Common myeloid progenitor, CD34-positive (primary cell): ENCODE measurements at regions of chr17 and their contacts with region 1.

Region 1: DNA sequence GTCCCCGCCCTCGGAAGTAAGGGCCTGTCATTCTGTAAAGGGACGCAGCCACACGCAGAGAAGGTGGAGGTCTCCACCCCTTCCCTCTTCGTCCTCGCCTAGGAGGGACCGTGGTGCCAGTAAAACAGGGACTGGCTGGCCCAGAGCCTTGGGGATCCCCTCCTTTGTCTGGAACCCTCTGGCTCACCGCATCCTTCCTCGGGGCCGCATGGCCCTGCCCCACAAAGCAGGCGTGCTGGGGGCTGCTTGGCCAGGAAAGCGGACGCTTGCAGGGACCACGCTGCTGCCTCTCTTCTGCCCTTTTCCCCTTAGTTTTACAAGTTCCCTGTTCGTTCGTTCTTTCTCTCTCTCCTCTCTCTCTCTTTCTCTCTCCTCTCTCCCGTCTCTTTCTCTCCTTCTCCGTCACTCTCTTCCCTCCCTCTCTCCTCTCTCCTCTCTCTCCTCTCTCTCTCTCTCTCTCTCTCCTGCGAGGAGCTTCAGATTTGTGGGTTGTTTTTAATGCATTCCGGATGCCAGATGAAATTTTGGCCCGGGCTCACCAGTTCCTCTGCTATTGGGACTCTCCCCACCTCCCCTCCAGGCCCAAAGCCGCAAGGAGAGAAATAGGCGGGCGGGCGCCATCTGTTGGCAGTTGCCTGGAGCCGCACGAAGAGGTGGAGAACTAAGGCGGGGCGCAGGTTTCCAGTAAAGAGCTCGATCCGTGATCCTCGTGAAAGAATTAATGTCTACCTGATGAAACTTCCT is 35.1 kb upstream of the CDRT4 start:
- DNase-seq: peak; percentile 80 to 91 (median 90)
- H3K4me3 ChIP-seq: peak overlapping the region in 3 of 7 experiments; percentile 25 to 55 (median 36)
- H3K27ac ChIP-seq: no peak overlapping the region
- H3K4me1 ChIP-seq: peaks cover 0 to 15% (median 10%) of the 10 kb centered on the region in 4 experiments
- H3K27me3 ChIP-seq: no peaks in the 10 kb centered on the region

Region 2: GRCh38 chr17:15247891-15248529 is 254.5 kb before region 1 on chr17:
- CTCF ChIA-PET with region 1: interaction called, 18 read pairs
- POLR2A ChIA-PET with region 1: no interaction called
- DNase-seq: peak in 1 of 3 donors; percentile 6
- H3K4me3 ChIP-seq: no peak overlapping the region
- H3K27ac ChIP-seq: no peak overlapping the region
- H3K4me1 ChIP-seq: no peaks in the 10 kb centered on the region
- H3K27me3 ChIP-seq: peaks cover 0 to 3% (median 0%) of the 10 kb centered on the region in 5 experiments

Region 3: DNA sequence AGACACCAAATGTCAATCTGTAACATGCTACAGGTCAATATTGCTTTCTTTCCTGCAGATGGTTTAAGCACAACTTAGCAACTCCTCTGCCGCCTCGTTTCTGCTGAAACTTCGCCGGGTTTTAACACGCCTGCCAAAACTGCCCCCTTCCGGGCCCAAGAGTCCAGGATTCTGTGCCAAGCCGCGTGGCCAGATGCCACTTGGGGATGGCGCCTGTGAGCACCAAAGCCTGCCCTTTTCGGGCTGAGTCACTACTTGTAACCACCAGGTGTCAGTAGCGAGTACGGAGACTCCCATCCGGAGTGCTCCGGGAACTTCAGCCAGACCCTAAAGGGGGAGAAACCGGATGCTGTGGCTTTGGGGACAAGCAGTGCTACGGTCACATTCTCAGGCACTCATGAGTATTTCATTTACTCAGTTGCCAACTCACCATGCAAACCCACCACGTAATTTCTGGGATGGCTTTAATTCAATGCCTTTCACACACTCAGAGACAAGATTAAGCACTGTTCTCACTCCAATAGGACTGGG is 245.2 kb before region 1 on chr17:
- CTCF ChIA-PET with region 1: interaction called, 54 read pairs
- POLR2A ChIA-PET with region 1: no interaction called
- DNase-seq: peak; percentile 68 to 78 (median 77)
- H3K4me3 ChIP-seq: peak overlapping the region in 4 of 7 experiments; percentile 4 to 38 (median 20)
- H3K27ac ChIP-seq: no peak overlapping the region
- H3K4me1 ChIP-seq: peaks cover 16 to 36% (median 29%) of the 10 kb centered on the region in 4 experiments
- H3K27me3 ChIP-seq: peaks cover 0 to 38% (median 13%) of the 10 kb centered on the region in 5 experiments

Region 4: DNA sequence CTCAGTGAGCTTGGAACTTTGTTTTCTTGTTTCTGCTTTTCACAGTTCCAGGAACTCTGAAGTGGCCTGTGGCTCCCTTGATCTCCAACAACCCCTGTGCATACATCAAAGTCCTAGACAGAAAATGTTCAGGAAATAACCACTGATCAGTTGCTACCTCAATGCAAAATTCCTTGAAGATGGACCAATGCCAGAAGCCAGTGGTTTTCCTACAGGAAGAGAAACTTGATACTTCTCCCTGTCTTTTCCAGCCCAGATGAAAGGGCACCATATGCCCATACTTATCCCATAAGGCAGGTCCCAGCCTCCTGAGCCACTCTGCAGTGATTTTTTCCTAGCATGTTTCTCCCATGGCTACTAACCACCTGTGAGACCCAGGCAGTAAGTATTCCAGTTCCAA is 22.8 kb before region 1 on chr17:
- CTCF ChIA-PET with region 1: interaction called, 13 read pairs
- POLR2A ChIA-PET with region 1: no interaction called
- DNase-seq: no peak
- H3K4me3 ChIP-seq: no peak overlapping the region
- H3K27ac ChIP-seq: no peak overlapping the region
- H3K4me1 ChIP-seq: peaks cover 0 to 5% (median 1%) of the 10 kb centered on the region in 4 experiments
- H3K27me3 ChIP-seq: no peaks in the 10 kb centered on the region

Region 5: DNA sequence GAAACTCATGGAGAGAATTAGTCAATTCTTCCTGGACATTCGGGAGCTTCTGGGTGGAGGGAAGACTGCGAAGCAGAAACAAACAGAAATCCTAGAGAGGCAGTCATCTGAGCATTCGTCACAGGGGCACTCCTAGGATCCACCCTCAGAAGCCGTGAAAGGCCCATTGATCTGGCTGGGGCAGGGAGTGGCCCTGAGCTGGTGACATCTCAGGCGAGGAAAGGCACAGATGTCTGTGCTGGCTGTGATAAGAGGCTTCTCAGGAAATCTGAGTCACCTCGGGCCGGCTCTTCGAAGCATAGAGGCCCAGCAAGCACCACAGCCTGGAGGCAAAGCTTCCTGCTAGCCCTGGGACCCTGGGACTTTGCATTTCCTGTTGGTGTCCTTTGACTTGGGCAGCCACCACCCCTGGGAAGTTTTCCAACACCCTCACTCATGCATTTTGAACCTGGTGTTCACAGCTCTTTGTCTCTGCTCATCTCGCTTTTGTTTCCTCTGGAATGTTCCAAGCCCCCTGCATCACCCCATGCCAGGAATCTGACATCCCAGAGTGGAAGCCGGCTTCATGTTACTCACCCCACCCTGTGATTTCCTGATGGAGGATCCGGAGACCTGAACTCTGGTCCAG is 11.8 kb before region 1 on chr17:
- CTCF ChIA-PET with region 1: interaction called, 17 read pairs
- POLR2A ChIA-PET with region 1: no interaction called
- DNase-seq: peak; percentile 89 to 97 (median 94)
- H3K4me3 ChIP-seq: peak overlapping the region in 3 of 7 experiments; percentile 4 to 44 (median 42)
- H3K27ac ChIP-seq: peak overlapping the region; percentile 56 to 76
- H3K4me1 ChIP-seq: peaks cover 2 to 26% (median 17%) of the 10 kb centered on the region in 4 experiments
- H3K27me3 ChIP-seq: no peaks in the 10 kb centered on the region

Region 6: GRCh38 chr17:15651583-15652110 is 149.1 kb after region 1 on chr17:
- CTCF ChIA-PET with region 1: no interaction called
- POLR2A ChIA-PET with region 1: no interaction called
- DNase-seq: peak; percentile 89 to 95 (median 94)
- H3K4me3 ChIP-seq: peak overlapping the region in 6 of 7 experiments; percentile 3 to 54 (median 22)
- H3K27ac ChIP-seq: no peak overlapping the region
- H3K4me1 ChIP-seq: peaks cover 0 to 22% (median 17%) of the 10 kb centered on the region in 4 experiments
- H3K27me3 ChIP-seq: no peaks in the 10 kb centered on the region